OCI-LY7 (cell line): ENCODE measurements at regions of chr22 and their contacts with region 1.

Region 1: DNA sequence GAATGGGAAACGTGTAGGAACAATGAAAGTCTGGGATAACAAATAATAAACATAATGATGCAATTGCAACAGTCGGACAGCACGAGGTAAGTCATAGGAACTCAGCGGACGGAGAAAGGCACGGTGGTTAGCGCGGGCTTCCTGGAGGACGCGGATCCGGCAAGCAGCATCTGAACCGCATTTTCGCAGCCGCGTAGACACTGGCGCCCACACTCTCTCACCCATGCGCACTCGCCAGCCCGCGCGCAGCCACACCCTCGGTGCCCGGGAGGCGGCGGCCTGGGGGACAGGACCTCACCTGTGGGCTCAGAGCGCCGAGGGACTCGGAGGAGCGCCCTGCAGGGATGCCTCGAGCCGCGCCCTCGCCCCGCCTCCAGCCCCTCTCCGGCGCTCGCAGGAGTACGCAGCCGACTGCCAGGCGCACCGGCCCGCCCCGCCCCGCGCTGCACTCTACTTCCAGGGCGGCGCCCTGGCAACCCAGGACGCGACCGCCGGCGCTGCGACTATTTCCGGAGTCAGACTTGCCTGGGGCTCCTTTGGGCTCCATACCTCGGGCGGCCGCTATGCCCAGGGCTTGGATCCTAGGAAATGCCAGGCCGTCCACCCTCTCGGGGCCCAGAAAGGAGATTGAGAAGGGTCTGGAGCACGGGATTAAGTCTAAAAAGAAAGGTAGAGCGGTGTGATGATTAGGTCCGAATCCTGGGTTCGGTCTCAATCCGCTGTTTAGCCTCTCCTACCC is at the start of gene TTLL1:
- DNase-seq: peak; percentile 91
- H3K4me3 ChIP-seq: peak within 1 kb of the TSS; percentile 75
- H3K27ac ChIP-seq: peak within 1 kb of the TSS; percentile 48
- H3K4me1 ChIP-seq: peaks cover 21% of the 10 kb centered on the region
- CTCF ChIP-seq: no peak
- total RNA-seq, gene TTLL1: 5.5 and 5.8 TPM in 2 replicates

Region 2: GRCh38 chr22:42856865-42857704 is 232.1 kb before region 1 on chr22 and contains the start of gene ARFGAP3:
- CTCF ChIA-PET with region 1: interaction called, 3 read pairs
- POLR2A ChIA-PET with region 1: no interaction called
- intact Hi-C with region 1: loop called (anchors 5 kb)
- DNase-seq: peak; percentile 92
- H3K4me3 ChIP-seq: peak within 1 kb of the TSS; percentile 74
- H3K27ac ChIP-seq: peak within 1 kb of the TSS; percentile 28
- H3K4me1 ChIP-seq: peaks cover 21% of the 10 kb centered on the region
- CTCF ChIP-seq: no peak
- total RNA-seq, gene ARFGAP3: 24.2 and 29.9 TPM in 2 replicates

Region 3: GRCh38 chr22:43042101-43042780 is 46.9 kb before region 1 on chr22:
- CTCF ChIA-PET with region 1: no interaction called
- POLR2A ChIA-PET with region 1: no interaction called
- intact Hi-C with region 1: no loop called
- DNase-seq: no peak
- H3K4me3 ChIP-seq: no peak overlapping the region
- H3K27ac ChIP-seq: no peak overlapping the region
- H3K4me1 ChIP-seq: no peaks in the 10 kb centered on the region
- CTCF ChIP-seq: no peak